ENCODE measurements at regions of chr5 and their contacts with region 1.

Region 1: DNA sequence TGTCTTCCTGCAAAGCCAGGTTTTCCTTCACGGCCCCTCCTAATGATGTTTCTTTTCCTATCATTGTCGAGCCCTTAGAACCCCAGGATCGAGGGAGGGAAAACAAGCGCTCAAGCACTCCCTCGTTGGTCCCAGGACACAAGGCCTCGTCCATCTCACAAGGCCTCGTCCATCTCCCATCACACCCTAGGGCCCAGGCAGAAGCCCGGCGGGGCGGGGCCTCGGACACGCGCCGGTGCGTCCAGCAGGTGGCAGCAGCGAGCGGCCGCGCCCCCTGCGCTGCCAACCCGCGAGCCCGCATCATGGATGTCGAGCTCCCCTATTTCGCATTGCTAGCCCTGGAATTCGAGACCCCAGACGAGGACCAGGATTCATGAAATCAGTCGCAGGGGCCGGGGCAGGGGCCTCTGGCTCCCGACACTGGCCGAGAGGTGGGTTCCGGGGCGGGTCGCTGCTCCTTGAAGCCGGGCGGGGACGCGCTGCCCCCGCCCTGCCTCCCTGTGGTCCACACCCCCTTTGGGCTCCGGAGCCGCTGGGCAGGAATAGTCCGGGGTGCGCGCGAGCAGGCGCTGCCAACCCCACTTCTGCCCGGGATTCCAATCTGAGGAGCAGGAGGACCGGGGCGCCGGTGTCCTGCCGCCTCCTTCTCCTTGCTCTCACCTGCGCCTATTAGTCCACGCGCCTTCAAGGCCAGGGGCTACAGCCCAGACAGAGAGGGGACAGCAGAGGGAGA is at the start of gene ABLIM3:
- DNase-seq: peak; percentile 58 to 79 (median 68)
- H3K4me3 ChIP-seq: peak within 1 kb of the TSS in 1 of 2 donors; percentile 58
- H3K4me3 Mint-ChIP-seq: peak within 1 kb of the TSS; percentile 33 to 76 (median 56)
- H3K27ac ChIP-seq: no peak within 1 kb of the TSS
- H3K27ac Mint-ChIP-seq: peak within 1 kb of the TSS in 1 of 7 donors; percentile 36
- H3K4me1 ChIP-seq: peaks cover 10% of the 10 kb centered on the region
- H3K4me1 Mint-ChIP-seq: peaks cover 0 to 5% (median under 1%) of the 10 kb centered on the region in 4 donors
- H3K27me3 ChIP-seq: no peaks in the 10 kb centered on the region
- H3K27me3 Mint-ChIP-seq: peaks cover 4 to 18% of the 10 kb centered on the region in 2 donors
- total RNA-seq, gene ABLIM3: not detected

Region 2: DNA sequence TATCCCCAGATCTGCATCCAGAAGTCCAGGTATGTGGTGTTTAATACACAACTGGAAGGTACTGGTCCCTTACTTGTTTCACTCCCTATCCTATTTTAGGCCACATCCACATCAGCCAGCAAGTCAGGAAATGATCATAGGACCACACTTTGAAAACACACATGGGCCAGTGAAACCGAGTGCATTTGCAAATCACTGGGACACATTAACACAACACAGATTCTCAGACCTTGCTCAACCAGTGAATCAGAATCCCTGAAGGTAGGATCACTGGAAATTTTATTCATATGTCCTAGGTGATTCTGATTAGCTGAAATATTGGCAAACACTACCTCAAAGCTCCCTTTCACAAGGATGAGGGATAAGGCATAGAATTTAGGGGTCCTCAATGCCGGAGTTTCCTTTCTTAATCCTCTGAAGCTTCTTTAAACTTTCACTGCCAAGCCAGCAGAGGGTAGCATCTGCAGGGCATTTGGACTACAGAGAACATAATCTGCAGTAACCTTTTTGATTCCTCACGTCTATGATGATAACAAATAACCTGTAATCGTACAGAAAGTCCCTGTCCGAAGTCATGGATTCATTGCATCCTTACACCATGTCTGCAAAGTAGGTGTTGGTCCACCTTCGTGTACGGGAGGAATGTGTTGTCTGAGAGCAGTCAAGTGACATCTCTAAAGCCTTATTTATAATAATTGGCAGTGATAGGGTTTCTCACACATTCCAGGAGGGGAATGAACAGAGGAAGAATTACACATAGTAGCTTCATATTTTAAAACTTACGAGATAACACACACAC is 11.1 kb before region 1 on chr5:
- CTCF ChIA-PET with region 1: interaction called, 25 read pairs
- POLR2A ChIA-PET with region 1: no interaction called
- intact Hi-C with region 1: no loop called
- DNase-seq: no peak
- H3K4me3 ChIP-seq: no peak overlapping the region
- H3K4me3 Mint-ChIP-seq: no peak overlapping the region
- H3K27ac ChIP-seq: no peak overlapping the region
- H3K27ac Mint-ChIP-seq: no peak overlapping the region
- H3K4me1 ChIP-seq: no peaks in the 10 kb centered on the region
- H3K4me1 Mint-ChIP-seq: no peaks in the 10 kb centered on the region
- H3K27me3 ChIP-seq: no peaks in the 10 kb centered on the region
- H3K27me3 Mint-ChIP-seq: peaks cover 23 to 30% of the 10 kb centered on the region in 2 donors